ENCODE measurements at regions of chrX and their contacts with region 1.

Region 1: DNA sequence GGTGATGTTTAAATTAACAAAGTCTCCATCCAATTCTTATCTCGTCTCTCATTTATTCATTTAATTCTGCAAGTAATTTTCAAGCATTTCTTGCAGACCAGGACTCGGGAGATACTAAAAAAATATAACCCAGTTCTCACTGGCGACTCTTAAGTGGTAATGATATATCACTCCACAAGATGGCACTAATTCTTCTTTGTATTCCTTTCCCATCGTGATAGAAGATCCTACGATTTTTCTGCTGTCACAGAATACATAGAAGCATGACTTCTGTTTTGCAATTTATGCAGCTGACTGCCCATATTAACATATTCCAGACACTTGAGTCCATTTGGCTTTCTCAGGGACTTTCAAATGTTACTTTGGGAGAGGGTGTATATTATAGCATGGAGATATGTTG is 64.0 kb upstream of the FGF13 start:
- DNase-seq: no peak

Region 2: GRCh38 chrX:137916090-137916746 is 859.3 kb before region 1 on chrX:
- intact Hi-C with region 1: no loop called
- DNase-seq: no peak

Region 3: DNA sequence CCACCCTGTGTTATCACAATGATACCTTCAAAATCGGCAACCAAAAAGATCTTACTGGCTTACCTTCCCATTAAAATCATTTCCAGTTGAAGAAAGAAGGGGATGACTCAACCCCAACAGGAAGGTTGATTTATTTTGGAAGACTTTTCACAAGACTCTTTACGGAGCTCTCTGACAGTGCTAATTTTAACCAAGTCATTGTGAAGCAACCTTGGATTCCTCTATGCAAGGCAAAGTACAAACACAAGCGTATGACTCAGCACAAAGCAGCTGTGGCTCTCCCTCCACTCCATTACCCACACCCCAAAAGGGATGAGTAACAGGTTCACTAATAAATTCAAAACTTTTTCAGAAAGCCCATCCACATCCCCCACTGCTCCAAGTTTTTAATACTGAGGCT is 149.8 kb after region 1 on chrX:
- intact Hi-C with region 1: no loop called
- DNase-seq: peak in 1 of 10 donors; percentile 36

Region 4: DNA sequence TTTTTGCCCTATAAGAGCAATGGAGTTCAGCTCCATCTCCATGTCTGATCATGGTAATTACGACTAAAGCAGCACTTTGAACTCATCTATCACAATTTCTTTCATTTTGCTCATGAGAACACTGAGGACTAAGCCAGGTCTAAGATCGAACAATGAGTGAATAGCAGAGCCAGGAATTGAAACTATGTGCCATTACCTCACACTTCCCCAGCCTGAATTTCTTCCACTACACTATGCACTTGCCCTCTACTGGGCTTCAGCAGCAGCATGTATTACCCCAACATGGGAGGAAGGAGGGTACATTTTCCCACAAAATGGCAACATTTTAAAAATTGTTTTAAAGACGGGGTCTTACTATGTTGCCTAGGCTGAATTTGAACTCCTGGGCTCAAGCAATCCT is 210.7 kb after region 1 on chrX:
- intact Hi-C with region 1: no loop called
- DNase-seq: no peak

Region 5: DNA sequence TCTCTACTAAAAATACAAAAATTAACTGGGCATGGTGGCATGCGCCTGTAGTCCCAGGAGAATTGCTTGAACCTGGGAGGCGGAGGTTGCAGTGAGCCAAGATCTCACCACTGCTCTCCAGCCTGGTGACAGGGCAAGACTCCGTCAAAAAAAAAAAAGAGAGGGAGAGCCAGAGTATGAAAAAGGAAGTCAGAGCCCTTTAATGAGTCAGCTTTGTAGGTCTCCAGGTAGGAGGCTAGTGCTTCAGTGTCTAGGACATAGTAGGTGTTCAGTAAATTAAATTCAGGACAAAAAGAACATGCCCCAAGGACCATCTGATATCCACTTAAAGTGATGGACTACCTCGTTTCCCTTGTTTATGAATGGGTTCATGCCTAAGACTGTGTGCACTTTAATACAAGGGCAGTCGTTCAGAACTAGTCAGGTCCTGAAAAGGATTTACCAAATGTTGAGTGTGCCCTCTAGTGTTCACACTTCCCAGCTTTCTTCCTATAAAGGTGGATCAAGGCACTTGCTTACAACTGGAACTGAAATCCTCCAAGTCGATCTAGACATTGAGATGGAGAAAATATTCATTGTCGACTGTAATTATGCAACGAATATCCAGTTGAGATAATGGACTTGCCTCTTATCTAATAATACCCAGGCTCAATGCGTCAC is 784.0 kb after region 1 on chrX:
- intact Hi-C with region 1: loop called (anchors 10 kb)
- DNase-seq: peak in 1 of 10 donors; percentile 8

Measured in posterior cingulate gyrus (tissue), 11 donors.